Activated B cell treated with CpG ODN at 0.5 μM for 24 hours (primary cell): ENCODE measurements at regions of chr7 and their contacts with region 1.

Region 1: DNA sequence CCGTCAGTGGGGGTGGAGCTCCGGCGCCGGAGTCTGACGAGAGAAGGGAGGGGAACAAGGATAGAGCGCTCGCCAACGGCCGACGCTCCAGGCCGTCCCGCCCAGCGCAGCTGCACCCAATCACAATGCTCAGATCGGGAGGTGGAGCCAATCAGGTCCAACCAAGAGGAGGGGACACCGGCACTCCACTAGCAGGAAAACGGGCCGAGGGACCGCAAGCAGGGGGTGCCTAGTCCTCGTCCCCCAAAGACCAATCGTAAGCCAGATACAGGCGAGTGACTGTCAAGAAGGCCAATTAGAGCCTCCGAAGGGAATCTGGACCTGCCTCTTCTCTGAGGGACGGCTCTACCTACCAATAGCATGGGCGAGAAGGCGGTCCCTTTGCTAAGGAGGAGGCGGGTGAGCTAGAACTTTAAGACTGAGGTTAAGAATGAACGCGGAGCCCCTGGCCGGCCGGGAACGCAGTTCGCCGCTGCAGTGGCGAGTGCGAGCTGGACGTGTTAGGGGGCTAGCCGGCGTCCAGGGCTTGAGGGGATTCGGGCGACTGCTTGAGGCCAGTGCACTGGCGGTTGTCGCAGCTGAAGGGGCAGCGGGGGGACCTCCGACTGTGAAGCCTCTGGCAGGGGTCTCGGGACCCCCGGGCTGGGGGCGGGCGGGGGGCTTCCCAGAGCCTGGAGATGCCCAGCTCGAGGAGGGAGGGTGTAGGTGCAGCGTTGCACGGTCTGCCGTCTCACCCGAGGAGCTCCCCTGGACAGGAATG is at the start of gene FBXO24:
- DNase-seq: peak; percentile 94
- ATAC-seq: peak; percentile 80
- H3K4me3 Mint-ChIP-seq: peak within 1 kb of the TSS; percentile 93
- H3K27ac Mint-ChIP-seq: peak within 1 kb of the TSS; percentile 96
- H3K4me1 Mint-ChIP-seq: peaks cover 38% of the 10 kb centered on the region
- H3K27me3 Mint-ChIP-seq: peaks cover 6% of the 10 kb centered on the region
- CTCF ChIP-seq: no peak
- total RNA-seq, gene FBXO24: 0.29 and 1.9 TPM in 2 replicates

Region 2: GRCh38 chr7:99143853-99144672 is 1442.4 kb before region 1 on chr7 and contains the start of gene SMURF1:
- CTCF ChIA-PET with region 1: no interaction called
- POLR2A ChIA-PET with region 1: no interaction called
- intact Hi-C with region 1: loop called (anchors 5 kb)
- DNase-seq: peak; percentile 86
- ATAC-seq: peak; percentile 55
- H3K4me3 Mint-ChIP-seq: peak within 1 kb of the TSS; percentile 89
- H3K27ac Mint-ChIP-seq: peak within 1 kb of the TSS; percentile 81
- H3K4me1 Mint-ChIP-seq: peaks cover 39% of the 10 kb centered on the region
- H3K27me3 Mint-ChIP-seq: peaks cover 7% of the 10 kb centered on the region
- CTCF ChIP-seq: no peak
- total RNA-seq, gene SMURF1: 21.6 and 23.1 TPM in 2 replicates

Region 3: DNA sequence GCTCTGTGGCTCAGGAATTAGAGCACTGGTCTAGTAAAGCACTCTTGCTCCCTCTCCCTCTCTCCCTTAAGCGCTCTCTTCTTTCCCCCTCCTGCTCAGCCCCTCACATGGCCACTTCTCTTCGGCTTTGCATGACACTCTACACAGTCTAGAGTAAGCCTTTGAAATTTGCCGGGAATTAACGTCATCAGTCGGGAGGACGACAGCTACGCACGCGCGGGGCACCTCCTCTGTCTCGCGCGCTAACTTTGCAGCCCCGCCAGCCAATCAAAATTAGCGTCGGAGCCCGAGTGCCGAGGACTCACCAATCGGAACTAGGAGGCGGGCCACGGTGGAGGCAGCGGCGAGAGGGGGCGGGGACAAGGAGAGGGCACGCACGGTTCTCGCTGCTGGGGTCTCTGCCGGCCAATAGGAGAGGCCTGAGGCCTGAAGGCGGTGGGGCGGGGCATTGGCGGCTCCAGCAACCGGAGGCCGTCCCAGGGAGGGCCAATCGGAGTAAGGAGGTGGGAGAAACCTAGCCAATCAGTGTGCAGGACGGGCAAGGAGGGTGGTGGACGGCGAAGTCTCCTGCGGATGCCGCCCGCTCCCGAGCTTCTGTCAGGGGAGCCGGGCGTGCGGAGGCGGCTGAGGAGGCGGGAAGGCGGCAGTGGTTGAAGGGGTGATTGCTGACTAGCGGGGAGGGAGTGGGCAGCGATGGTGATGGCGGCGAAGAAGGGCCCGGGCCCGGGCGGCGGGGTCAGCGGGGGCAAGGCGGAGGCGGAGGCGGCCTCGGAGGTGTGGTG is 47.6 kb before region 1 on chr7 and contains the start of gene AGFG2:
- CTCF ChIA-PET with region 1: no interaction called
- POLR2A ChIA-PET with region 1: interaction called, 8 read pairs
- intact Hi-C with region 1: loop called (anchors 1 kb)
- DNase-seq: peak; percentile 97
- ATAC-seq: peak; percentile 98
- H3K4me3 Mint-ChIP-seq: peak within 1 kb of the TSS; percentile 100
- H3K27ac Mint-ChIP-seq: peak within 1 kb of the TSS; percentile 87
- H3K4me1 Mint-ChIP-seq: peaks cover 32% of the 10 kb centered on the region
- H3K27me3 Mint-ChIP-seq: no peaks in the 10 kb centered on the region
- CTCF ChIP-seq: no peak
- total RNA-seq, gene AGFG2: 9.5 and 10.8 TPM in 2 replicates

Region 4: DNA sequence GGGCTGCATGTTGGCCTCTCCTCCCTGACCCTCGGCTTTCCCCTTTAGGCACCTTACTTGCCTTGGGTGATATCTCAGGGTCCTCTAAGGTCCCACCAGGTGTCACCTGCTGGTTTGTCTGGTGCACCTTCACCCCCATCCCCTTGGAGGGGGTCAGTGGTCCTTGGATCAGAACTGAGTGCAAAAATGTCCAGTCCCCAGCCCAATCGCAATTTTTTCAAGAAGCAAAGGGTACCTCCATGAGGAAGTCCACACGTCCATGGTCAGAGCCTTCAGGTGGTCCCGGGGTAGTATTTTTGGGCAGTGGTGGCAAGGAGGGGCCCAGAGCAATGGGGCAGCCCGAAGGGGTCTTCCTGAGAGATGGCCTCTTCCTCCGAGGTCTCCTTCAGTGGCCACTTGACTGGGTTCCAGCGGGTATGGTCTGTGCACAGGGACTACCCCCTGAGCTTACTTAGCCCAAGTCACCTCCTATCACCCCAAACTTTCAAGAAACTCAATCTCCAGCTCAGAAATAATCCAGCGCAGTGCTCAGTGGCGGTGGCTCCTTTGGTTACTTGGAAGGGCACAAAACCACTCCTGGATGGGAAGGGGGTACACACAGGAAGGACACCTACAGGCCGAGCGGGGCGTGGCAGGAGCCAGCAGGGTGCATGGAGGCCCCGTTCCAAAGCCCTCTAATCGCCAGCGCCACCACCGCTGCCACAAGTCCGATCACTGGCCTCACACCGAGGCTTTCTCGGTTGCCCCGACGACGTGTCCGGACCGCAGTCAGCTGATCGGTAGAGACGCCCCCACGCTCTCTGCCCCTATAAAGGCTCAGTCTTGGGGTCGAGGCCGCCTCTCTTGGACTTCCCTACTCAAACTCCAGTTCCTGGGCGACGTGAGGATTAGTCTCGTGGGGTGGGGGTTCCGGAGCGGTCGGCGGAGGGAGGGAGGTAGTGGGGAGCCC is 17.3 kb before region 1 on chr7:
- CTCF ChIA-PET with region 1: interaction called, 24 read pairs
- POLR2A ChIA-PET with region 1: interaction called, 31 read pairs
- intact Hi-C with region 1: loop called (anchors 1 kb)
- DNase-seq: peak; percentile 43
- ATAC-seq: peak; percentile 45
- H3K4me3 Mint-ChIP-seq: peak overlapping the region; percentile 59
- H3K27ac Mint-ChIP-seq: peak overlapping the region; percentile 63
- H3K4me1 Mint-ChIP-seq: peaks cover 42% of the 10 kb centered on the region
- H3K27me3 Mint-ChIP-seq: no peaks in the 10 kb centered on the region
- CTCF ChIP-seq: no peak

Region 5: GRCh38 chr7:100626530-100627237 is 40.2 kb after region 1 on chr7:
- CTCF ChIA-PET with region 1: no interaction called
- POLR2A ChIA-PET with region 1: interaction called, 17 read pairs
- intact Hi-C with region 1: loop called (anchors 1 kb)
- DNase-seq: peak; percentile 58
- ATAC-seq: peak; percentile 100
- H3K4me3 Mint-ChIP-seq: peak overlapping the region; percentile 67
- H3K27ac Mint-ChIP-seq: no peak overlapping the region
- H3K4me1 Mint-ChIP-seq: peaks cover 10% of the 10 kb centered on the region
- H3K27me3 Mint-ChIP-seq: no peaks in the 10 kb centered on the region
- CTCF ChIP-seq: no peak

Region 6: GRCh38 chr7:100691676-100692577 is 105.5 kb after region 1 on chr7:
- CTCF ChIA-PET with region 1: interaction called, 6 read pairs
- POLR2A ChIA-PET with region 1: interaction called, 25 read pairs
- intact Hi-C with region 1: loop called (anchors 5 kb)
- DNase-seq: peak; percentile 67
- ATAC-seq: peak; percentile 63
- H3K4me3 Mint-ChIP-seq: peak overlapping the region; percentile 90
- H3K27ac Mint-ChIP-seq: peak overlapping the region; percentile 80
- H3K4me1 Mint-ChIP-seq: peaks cover 49% of the 10 kb centered on the region
- H3K27me3 Mint-ChIP-seq: no peaks in the 10 kb centered on the region
- CTCF ChIP-seq: peak; percentile 21

Region 7: DNA sequence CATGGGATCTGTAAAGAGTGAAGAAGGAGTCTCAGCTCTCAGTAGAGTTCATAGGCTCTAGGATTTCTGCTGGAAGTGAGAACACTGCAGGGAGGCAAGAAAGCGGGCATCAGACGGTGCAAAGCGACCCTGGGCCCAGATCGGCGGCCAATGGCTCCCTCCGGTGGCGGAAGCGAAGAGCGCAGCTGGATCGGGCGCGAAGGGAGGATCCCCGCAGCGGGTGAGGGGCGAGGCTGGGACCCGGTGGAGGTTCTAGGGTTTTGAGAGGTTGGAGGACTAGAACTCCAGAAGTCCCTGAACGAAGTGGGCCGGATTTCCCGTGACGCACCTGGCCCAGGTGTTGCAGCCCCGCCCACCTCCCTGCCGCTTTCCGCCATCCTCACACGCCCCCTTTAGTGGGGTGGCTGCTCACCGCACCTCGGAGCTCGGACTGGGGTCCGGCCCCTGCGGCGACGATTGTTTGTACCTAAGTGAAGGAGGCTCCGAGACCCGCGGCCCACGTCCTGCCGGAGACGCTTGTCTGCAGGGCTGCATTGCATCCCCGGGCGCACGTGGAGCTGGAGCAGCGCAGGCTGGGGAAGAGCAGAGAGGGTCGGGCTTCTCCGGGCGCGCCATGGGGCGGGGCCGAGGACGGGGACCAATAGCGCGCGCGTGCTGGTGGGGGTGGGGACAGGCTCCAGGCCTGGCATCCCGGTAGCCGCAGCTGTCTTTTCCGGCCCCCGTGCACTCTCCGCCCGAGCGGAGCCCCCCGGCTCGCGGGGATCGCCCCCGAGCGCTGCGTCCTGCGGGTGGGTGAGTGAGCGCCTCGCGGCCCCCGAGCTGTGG is 265.8 kb after region 1 on chr7 and contains the start of gene SLC12A9:
- CTCF ChIA-PET with region 1: no interaction called
- POLR2A ChIA-PET with region 1: interaction called, 11 read pairs
- intact Hi-C with region 1: loop called (anchors 1 kb)
- DNase-seq: peak; percentile 83
- ATAC-seq: peak; percentile 93
- H3K4me3 Mint-ChIP-seq: peak within 1 kb of the TSS; percentile 89
- H3K27ac Mint-ChIP-seq: peak within 1 kb of the TSS; percentile 75
- H3K4me1 Mint-ChIP-seq: peaks cover 21% of the 10 kb centered on the region
- H3K27me3 Mint-ChIP-seq: no peaks in the 10 kb centered on the region
- CTCF ChIP-seq: peak; percentile 79
- total RNA-seq, gene SLC12A9: 48.0 and 48.9 TPM in 2 replicates